Posterior vena cava (tissue), 2 donors: ENCODE measurements at regions of chr11 and their contacts with region 1.

Region 1: GRCh38 chr11:122007601-122008071 is 108.4 kb downstream of the BLID start:
- DNase-seq: no peak

Region 2: GRCh38 chr11:122293296-122294023 is 285.8 kb after region 1 on chr11:
- intact Hi-C with region 1: loop called in 1 of 2 experiments (anchors 2 kb)
- DNase-seq: no peak